AG04449 (cell line): ENCODE measurements at regions of chr21 and their contacts with region 1.

Region 1: GRCh38 chr21:27564684-27565301 is 597.9 kb upstream of the ADAMTS5 start:
- DNase-seq: no peak
- H3K4me3 ChIP-seq: no peak overlapping the region
- CTCF ChIP-seq: peak; percentile 52

Region 2: GRCh38 chr21:26850108-26850643 is 714.6 kb before region 1 on chr21:
- CTCF ChIA-PET with region 1: interaction called, 12 read pairs
- POLR2A ChIA-PET with region 1: interaction called, 4 read pairs
- DNase-seq: no peak
- H3K4me3 ChIP-seq: no peak overlapping the region
- CTCF ChIP-seq: peak; percentile 29

Region 3: DNA sequence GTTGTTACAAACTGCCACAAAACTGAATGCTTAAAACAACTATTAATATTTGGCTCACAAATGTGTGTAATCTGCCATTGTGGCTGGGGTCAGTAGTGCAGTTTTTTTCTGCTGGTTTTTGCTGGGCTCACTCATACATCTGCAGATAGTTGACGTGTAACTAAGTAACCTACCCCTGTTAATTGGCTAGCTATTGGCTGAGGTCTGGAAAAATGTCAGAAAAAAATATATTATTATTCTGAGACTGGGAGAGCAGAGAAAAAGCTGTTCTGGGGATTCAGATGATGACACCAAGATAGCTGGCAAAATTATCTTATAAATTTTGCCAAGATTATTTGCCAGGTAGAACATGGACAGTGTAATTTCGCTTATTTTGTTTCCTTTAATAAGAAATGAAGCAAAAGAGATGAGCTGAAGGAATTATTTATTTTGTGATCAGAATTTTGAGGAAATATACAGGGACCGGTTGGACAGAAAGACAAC is 18.2 kb after region 1 on chr21:
- CTCF ChIA-PET with region 1: interaction called, 18 read pairs
- POLR2A ChIA-PET with region 1: interaction called, 7 read pairs
- DNase-seq: no peak
- H3K4me3 ChIP-seq: no peak overlapping the region
- CTCF ChIP-seq: no peak